Right ventricle myocardium inferior (tissue), 1 donor: ENCODE measurements at regions of chr11 and their contacts with region 1.

Region 1: GRCh38 chr11:95705485-95706124 is 84.0 kb downstream of the FAM76B start:
- DNase-seq: peak; percentile 88
- ATAC-seq: peak; percentile 97

Region 2: GRCh38 chr11:94925422-94926270 is 780.0 kb before region 1 on chr11:
- intact Hi-C with region 1: no loop called
- DNase-seq: no peak
- ATAC-seq: no peak

Region 3: DNA sequence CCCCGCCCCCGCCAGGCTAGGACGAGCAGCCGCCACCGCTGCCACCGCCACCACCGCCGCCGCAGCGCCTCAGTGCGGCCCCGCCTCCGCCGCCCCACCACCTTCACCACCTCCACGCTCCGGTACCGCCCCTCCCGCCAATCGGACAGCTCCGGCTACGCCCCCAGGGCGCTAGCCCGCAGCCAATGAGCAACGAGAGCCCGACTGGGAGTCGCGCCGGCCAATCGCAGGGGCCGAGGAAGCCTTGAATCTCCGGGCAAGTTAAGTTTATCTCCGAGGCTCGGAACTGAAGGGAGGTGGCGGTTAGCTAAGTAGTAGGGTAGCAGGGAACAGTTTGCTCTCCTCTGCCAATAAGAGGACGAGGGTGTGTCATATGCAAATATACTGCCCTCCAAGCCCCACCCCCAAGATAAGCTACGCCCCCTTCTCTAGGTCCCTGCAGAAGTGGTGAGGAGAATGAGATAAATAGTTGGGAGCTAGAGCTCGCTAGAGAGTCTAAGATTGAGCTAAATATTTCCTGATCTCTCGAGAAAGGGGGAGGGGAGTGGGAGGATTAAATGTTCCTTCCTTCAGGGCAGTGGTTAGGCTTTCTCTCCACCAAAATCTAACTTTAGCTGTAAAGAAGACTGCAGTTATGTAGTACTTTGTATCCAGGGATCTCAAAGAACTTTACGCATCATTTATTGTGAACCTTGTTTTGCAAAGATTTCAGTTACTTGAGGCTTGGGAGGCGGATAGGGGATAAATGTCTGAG is 474.3 kb before region 1 on chr11 and contains the start of gene SESN3:
- intact Hi-C with region 1: loop called (anchors 5 kb)
- DNase-seq: peak; percentile 99
- ATAC-seq: peak; percentile 98
- total RNA-seq, gene SESN3: 6.0 TPM

Region 4: DNA sequence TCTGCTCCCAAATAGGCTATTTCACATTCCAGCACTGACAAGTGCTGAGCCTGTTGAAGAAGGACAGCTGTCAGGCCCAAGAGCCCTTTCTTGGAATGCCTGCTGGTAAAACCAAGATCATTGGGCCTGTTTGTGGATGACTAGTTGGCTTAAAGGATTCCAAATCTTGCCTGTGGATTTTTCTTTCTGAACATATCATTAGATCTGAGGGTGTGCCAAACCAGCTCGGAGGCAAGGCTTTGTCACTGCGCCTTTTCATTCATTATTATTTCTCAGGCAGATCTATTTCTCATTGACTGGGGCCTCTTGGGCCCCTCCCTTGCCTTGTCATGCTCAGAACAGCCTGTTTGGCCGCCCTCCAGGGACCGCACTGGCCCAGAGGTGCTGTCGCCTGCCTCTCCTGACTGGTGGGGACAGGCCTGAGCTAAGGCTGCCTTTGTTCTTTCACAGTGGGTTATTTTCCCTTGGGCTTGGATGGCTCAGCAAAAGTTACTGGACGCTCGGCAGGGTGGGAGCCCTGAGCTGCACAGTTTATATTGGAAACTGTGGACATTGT is 251.9 kb before region 1 on chr11:
- intact Hi-C with region 1: no loop called
- DNase-seq: peak; percentile 81
- ATAC-seq: peak; percentile 75